BJ (cell line): ENCODE measurements at regions of chr19 and their contacts with region 1.

Region 1: DNA sequence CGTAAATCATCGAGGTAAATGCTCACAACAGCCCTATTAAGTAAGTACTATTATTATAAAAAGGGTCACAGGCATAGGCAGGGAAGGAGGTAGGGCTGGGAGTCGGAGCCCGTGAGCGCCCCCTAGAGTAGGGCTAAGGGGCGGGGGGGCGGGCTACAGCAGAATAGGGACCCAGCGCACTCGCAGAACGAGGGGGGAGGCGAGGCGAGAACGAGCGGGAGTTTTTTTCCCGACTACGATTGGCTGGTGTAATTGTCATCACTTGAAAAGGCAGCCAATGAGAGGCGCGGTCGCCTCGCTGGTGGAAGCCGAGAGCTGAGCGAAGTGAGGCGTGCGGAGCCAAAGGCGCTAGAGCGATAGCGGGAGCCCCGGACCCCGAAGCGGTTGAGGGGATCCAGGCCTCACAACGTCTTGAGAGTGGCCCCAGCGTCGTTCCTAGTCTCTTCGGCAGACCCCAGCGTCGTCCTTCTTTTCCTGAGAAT is 24.2 kb downstream of the KEAP1 start:
- DNase-seq: peak; percentile 62
- H3K4me3 ChIP-seq: peak overlapping the region; percentile 37
- H3K27me3 ChIP-seq: no peaks in the 10 kb centered on the region
- CTCF ChIP-seq: peak; percentile 70

Region 2: DNA sequence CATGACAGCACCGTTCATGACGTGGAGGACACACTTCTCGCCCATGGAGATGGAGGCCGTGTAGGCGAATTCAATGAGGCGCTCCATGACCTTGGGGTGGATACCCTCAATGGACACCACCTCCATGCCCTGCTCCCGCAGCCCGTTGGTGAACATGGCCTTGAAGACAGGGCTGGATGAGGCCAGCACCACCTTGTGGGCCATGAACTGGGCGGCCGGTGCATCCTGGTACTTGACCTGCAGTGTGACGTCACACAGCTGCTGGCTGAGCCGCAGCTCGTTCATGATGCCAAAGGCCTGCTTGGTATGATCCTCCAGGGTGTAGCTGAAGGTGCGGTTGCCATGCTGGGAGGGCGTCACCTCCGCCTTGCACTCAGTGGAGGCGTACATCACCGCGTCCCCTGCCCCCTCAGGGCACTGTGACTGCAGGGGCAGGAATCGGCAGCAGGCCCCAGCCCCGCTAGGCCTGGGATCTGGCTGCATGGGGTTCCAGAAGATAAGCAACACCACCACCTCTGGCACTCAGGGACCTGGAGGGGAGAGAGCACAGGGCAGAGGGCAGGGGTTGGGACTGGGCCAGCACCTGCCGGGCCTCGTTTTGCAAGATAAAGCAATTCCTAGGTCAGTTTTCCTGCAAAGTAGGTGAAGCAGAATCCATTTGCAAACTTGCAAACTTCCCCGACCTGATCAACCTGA is 20.8 kb after region 1 on chr19:
- CTCF ChIA-PET with region 1: interaction called, 16 read pairs
- POLR2A ChIA-PET with region 1: no interaction called
- DNase-seq: no peak
- H3K4me3 ChIP-seq: no peak overlapping the region
- H3K27me3 ChIP-seq: no peaks in the 10 kb centered on the region
- CTCF ChIP-seq: no peak

Region 3: GRCh38 chr19:10543420-10544241 is 64.7 kb after region 1 on chr19 and contains the start of gene ATG4D:
- CTCF ChIA-PET with region 1: interaction called, 10 read pairs
- POLR2A ChIA-PET with region 1: no interaction called
- DNase-seq: no peak
- H3K4me3 ChIP-seq: peak within 1 kb of the TSS; percentile 89
- H3K27me3 ChIP-seq: no peaks in the 10 kb centered on the region
- CTCF ChIP-seq: no peak
- polyA plus RNA-seq, gene ATG4D: 6.8 and 13.0 TPM in 2 replicates

Region 4: GRCh38 chr19:10565567-10566407 is 86.8 kb after region 1 on chr19 and contains the start of gene KRI1:
- CTCF ChIA-PET with region 1: interaction called, 11 read pairs
- POLR2A ChIA-PET with region 1: no interaction called
- DNase-seq: peak; percentile 84
- H3K4me3 ChIP-seq: peak within 1 kb of the TSS; percentile 99
- H3K27me3 ChIP-seq: no peaks in the 10 kb centered on the region
- CTCF ChIP-seq: peak; percentile 27
- polyA plus RNA-seq, gene KRI1: 8.4 and 10.0 TPM in 2 replicates

Region 5: GRCh38 chr19:10574462-10574861 is 95.5 kb after region 1 on chr19:
- CTCF ChIA-PET with region 1: interaction called, 30 read pairs
- POLR2A ChIA-PET with region 1: no interaction called
- DNase-seq: no peak
- H3K4me3 ChIP-seq: no peak overlapping the region
- H3K27me3 ChIP-seq: no peaks in the 10 kb centered on the region
- CTCF ChIP-seq: no peak